Lower leg skin (tissue), 4 donors: ENCODE measurements at regions of chr10 and their contacts with region 1.

Region 1: GRCh38 chr10:49379596-49380410 is 16.1 kb downstream of the DRGX start:
- DNase-seq: no peak
- H3K4me3 ChIP-seq: no peak overlapping the region
- CTCF ChIP-seq: no peak
- POLR2A ChIP-seq: no peak

Region 2: DNA sequence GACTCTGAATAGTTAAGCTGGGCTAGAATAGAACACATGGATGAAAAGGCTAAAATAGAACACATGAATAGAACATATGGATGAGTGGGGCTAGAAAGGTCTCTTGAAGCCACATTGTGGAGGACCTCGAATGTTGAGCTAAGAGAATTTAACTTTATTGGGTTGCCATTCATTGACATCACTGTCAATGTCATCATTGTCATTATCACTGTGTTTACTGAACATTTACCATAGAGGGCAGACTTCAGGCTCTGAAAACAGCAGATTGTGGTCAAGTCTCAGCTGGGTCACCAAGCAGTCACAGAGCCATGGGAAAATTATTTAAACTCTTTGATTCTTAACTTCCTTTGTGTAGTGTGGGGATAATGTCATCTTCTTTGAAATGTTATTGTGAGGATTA is 614.8 kb before region 1 on chr10:
- intact Hi-C with region 1: no loop called
- DNase-seq: no peak
- H3K4me3 ChIP-seq: no peak overlapping the region
- CTCF ChIP-seq: no peak
- POLR2A ChIP-seq: no peak

Region 3: GRCh38 chr10:48838834-48839233 is 541.0 kb before region 1 on chr10:
- intact Hi-C with region 1: no loop called
- DNase-seq: no peak
- H3K4me3 ChIP-seq: no peak overlapping the region
- CTCF ChIP-seq: no peak
- POLR2A ChIP-seq: no peak

Region 4: GRCh38 chr10:49109669-49110340 is 270.0 kb before region 1 on chr10:
- intact Hi-C with region 1: loop called (anchors 5 kb)
- DNase-seq: peak; percentile 37 to 91
- H3K4me3 ChIP-seq: no peak overlapping the region
- CTCF ChIP-seq: no peak
- POLR2A ChIP-seq: no peak